ENCODE measurements at regions of chr17 and their contacts with region 1.

Region 1: GRCh38 chr17:75779231-75779986 is 5.2 kb upstream of the UNK start:
- DNase-seq: peak; percentile 94 to 99 (median 98)
- ATAC-seq: peak; percentile 73
- H3K4me3 ChIP-seq: peak overlapping the region; percentile 85
- H3K27ac ChIP-seq: peak overlapping the region; percentile 92
- H3K4me1 ChIP-seq: peaks cover 9 to 22% of the 10 kb centered on the region in 2 experiments; a peak in 4 of 5 replicates
- H3K27me3 ChIP-seq: no peaks in the 10 kb centered on the region
- CTCF ChIP-seq: 0 out of 6 replicates have a peak, but pooled peaks of 1 of the 3 experiments have one; percentile 2
- EP300 ChIP-seq: 0 out of 2 replicates have a peak, but pooled peaks have one; percentile 16
- POLR2A ChIP-seq: peak; percentile 100
- RAD21 ChIP-seq: no peak; a peak in 1 of 4 replicates

Region 2: DNA sequence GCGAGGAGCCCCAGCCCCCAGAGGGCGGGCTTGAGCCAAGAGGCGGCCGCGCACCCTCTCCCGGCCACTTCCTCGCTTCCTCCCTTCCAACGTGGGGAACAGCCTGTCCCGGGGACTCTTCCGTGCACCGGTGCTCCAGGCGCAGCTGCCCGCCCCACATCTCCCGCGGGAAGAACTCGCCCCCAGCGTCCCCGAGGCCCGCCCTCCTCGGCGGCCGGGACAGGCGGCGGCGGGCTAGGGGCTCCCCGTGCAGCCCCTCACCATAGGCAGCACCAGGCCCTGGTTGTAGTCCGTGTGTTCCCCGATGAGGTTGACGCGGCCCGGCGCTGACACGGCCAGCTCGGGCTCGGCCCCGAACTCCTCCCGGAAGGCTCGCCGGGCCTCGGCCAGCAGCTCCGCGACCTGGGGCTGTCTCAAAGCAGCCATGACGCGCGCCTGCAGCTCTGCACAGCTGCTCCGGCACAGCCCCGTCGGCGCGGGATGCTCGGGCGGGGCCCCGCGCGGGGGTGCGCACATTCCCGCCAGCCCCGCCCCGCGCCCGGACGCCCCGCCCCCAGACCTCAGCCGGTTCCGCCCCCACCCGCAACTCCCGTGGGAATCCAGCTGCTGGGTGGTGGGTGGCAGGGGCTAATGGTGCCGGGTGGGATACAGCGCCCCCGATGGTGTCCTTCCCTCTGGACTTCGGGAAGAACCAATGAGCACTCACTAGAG is 14.5 kb before region 1 on chr17 and contains the start of gene GALK1:
- CTCF ChIA-PET with region 1: no interaction called
- POLR2A ChIA-PET with region 1: interaction called, 464 read pairs
- in situ Hi-C with region 1: no loop called
- intact Hi-C with region 1: no loop called
- DNase-seq: peak; percentile 85 to 92 (median 90)
- ATAC-seq: peak; percentile 95
- H3K4me3 ChIP-seq: peak within 1 kb of the TSS; percentile 74
- H3K27ac ChIP-seq: peak within 1 kb of the TSS; percentile 59
- H3K4me1 ChIP-seq: peaks cover 12 to 38% of the 10 kb centered on the region in 2 experiments
- H3K27me3 ChIP-seq: no peaks in the 10 kb centered on the region
- CTCF ChIP-seq: peak; percentile 82 to 96 (median 92); a peak in 5 of 6 replicates
- EP300 ChIP-seq: no peak
- POLR2A ChIP-seq: peak; percentile 65
- RAD21 ChIP-seq: peak; percentile 78 to 86
- polyA plus RNA-seq, gene GALK1: 0.45 to 2.1 TPM

Region 3: GRCh38 chr17:75799398-75799797 is 20.0 kb after region 1 on chr17:
- CTCF ChIA-PET with region 1: no interaction called
- POLR2A ChIA-PET with region 1: interaction called, 62 read pairs
- in situ Hi-C with region 1: no loop called
- intact Hi-C with region 1: no loop called
- DNase-seq: peak in 1 of 4 experiments; percentile 27
- ATAC-seq: no peak
- H3K4me3 ChIP-seq: no peak overlapping the region
- H3K27ac ChIP-seq: no peak overlapping the region
- H3K4me1 ChIP-seq: no peaks in the 10 kb centered on the region; a peak in 1 of 5 replicates
- H3K27me3 ChIP-seq: no peaks in the 10 kb centered on the region
- CTCF ChIP-seq: no peak
- EP300 ChIP-seq: no peak
- POLR2A ChIP-seq: no peak
- RAD21 ChIP-seq: no peak

Region 4: DNA sequence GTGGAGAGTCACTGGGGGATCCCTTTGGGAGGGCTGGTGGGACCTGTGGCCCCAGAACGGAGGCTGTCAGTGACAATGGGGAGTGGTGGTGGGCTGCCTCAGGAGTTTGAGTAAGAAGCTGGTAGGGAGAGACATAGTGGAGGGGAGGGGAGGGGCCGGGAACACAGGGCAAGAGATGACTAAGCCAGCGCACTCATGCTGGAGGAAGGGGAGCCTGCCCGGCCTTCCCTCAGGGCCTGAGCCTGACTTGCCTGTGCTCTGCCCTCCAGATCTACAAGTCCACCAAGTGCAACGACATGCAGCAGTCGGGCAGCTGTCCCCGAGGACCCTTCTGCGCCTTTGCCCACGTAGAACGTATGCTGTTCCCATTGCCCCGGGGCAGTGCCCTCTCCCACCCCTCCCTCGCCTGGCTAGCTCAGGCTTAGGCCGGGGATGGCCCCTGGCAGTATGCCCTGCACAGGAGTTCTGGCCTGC is 35.5 kb after region 1 on chr17:
- CTCF ChIA-PET with region 1: no interaction called
- POLR2A ChIA-PET with region 1: interaction called, 121 read pairs
- in situ Hi-C with region 1: no loop called
- intact Hi-C with region 1: no loop called
- DNase-seq: no peak
- ATAC-seq: no peak
- H3K4me3 ChIP-seq: no peak overlapping the region
- H3K27ac ChIP-seq: no peak overlapping the region
- H3K4me1 ChIP-seq: peaks cover 0 to 21% of the 10 kb centered on the region in 2 experiments; a peak in 2 of 5 replicates
- H3K27me3 ChIP-seq: no peaks in the 10 kb centered on the region
- CTCF ChIP-seq: no peak
- EP300 ChIP-seq: no peak
- POLR2A ChIP-seq: no peak
- RAD21 ChIP-seq: no peak

Region 5: GRCh38 chr17:75845049-75845860 is 65.8 kb after region 1 on chr17:
- CTCF ChIA-PET with region 1: interaction called, 3 read pairs
- POLR2A ChIA-PET with region 1: interaction called, 145 read pairs
- in situ Hi-C with region 1: no loop called
- intact Hi-C with region 1: loop called (anchors 5 kb)
- DNase-seq: peak; percentile 79 to 98 (median 87)
- ATAC-seq: peak; percentile 85
- H3K4me3 ChIP-seq: peak overlapping the region; percentile 69
- H3K27ac ChIP-seq: peak overlapping the region; percentile 95
- H3K4me1 ChIP-seq: peaks cover 39 to 87% of the 10 kb centered on the region in 2 experiments
- H3K27me3 ChIP-seq: no peaks in the 10 kb centered on the region
- CTCF ChIP-seq: peak; percentile 85 to 92 (median 90)
- EP300 ChIP-seq: peak; percentile 80
- POLR2A ChIP-seq: peak; percentile 68
- RAD21 ChIP-seq: peak; percentile 54 to 76

Region 6: DNA sequence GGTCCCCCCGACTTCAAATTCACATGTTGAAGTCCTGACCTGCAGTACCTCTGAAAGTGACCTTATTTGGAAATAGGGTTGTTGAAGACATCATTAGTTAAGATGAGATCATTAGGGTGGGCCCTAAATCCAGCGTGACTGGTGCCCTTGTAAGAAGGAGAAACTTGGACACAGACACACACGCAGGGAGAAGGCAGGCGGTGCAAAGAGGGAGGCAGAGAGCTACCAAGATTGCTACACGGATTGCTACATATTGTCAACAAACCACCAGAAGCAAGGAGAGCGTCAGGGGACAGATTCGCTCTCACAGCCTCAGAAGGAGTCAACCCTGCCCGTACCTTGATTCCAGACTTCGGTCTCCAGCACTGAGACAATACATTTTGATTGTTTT is 82.5 kb after region 1 on chr17:
- CTCF ChIA-PET with region 1: no interaction called
- POLR2A ChIA-PET with region 1: interaction called, 109 read pairs
- in situ Hi-C with region 1: no loop called
- intact Hi-C with region 1: loop called (anchors 5 kb)
- DNase-seq: no peak
- ATAC-seq: no peak
- H3K4me3 ChIP-seq: no peak overlapping the region
- H3K27ac ChIP-seq: peak overlapping the region; percentile 52; the same call in 1 of the 3 replicates
- H3K4me1 ChIP-seq: peaks cover 36 to 37% of the 10 kb centered on the region in 2 experiments
- H3K27me3 ChIP-seq: no peaks in the 10 kb centered on the region
- CTCF ChIP-seq: no peak
- EP300 ChIP-seq: no peak
- POLR2A ChIP-seq: no peak
- RAD21 ChIP-seq: no peak

Region 7: GRCh38 chr17:76005263-76006149 is 226.1 kb after region 1 on chr17:
- CTCF ChIA-PET with region 1: no interaction called
- POLR2A ChIA-PET with region 1: interaction called, 9 read pairs
- in situ Hi-C with region 1: loop called (anchors 10 kb)
- intact Hi-C with region 1: no loop called
- DNase-seq: peak; percentile 79 to 89 (median 81)
- ATAC-seq: peak; percentile 89
- H3K4me3 ChIP-seq: no peak overlapping the region
- H3K27ac ChIP-seq: no peak overlapping the region
- H3K4me1 ChIP-seq: peaks cover 0 to 45% of the 10 kb centered on the region in 2 experiments; a peak in 3 of 5 replicates
- H3K27me3 ChIP-seq: peaks cover 31 to 34% of the 10 kb centered on the region in 2 experiments
- CTCF ChIP-seq: peak; percentile 83 to 91 (median 86)
- EP300 ChIP-seq: no peak
- POLR2A ChIP-seq: no peak
- RAD21 ChIP-seq: peak; percentile 96 to 97

Measured in K562 (cell line).